Left lung (tissue), 14 donors: ENCODE measurements at regions of chr1 and their contacts with region 1.

Region 1: DNA sequence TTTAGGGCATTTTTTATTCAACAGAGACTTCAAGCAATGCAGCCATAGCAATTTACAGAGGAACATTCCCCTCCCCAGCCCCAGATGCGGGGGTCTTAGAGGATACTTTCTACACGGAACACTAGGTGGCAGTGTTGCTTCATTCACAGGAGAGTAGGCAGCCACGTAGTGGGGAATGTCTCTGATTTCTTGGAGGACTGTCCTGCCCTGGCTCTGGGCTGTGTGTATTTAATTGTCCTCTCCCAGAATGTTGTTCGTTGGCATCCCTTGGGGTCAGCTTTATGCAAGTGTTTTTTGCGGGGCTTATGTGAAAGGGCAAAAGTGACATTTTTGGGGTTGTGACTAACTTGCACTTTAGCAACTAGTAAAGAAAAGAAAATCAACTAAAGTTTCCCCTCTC is 96.9 kb downstream of the PAPPA2 start:
- DNase-seq: peak in 2 of 4 donors; percentile 59 to 82
- ATAC-seq: peak; percentile 98
- H3K4me3 ChIP-seq: no peak overlapping the region
- H3K27ac ChIP-seq: no peak overlapping the region
- H3K4me1 ChIP-seq: no peaks in the 10 kb centered on the region
- H3K27me3 ChIP-seq: peaks cover 0 to 22% of the 10 kb centered on the region in 2 donors
- CTCF ChIP-seq: peak; percentile 69 to 75

Region 2: GRCh38 chr1:176691251-176692228 is 131.7 kb after region 1 on chr1:
- intact Hi-C with region 1: loop called in 1 of 2 experiments (anchors 10 kb)
- DNase-seq: peak in 2 of 4 donors; percentile 17 to 36
- ATAC-seq: peak; percentile 63
- H3K4me3 ChIP-seq: no peak overlapping the region
- H3K27ac ChIP-seq: no peak overlapping the region
- H3K4me1 ChIP-seq: no peaks in the 10 kb centered on the region
- H3K27me3 ChIP-seq: no peaks in the 10 kb centered on the region
- CTCF ChIP-seq: peak; percentile 43 to 54

Region 3: DNA sequence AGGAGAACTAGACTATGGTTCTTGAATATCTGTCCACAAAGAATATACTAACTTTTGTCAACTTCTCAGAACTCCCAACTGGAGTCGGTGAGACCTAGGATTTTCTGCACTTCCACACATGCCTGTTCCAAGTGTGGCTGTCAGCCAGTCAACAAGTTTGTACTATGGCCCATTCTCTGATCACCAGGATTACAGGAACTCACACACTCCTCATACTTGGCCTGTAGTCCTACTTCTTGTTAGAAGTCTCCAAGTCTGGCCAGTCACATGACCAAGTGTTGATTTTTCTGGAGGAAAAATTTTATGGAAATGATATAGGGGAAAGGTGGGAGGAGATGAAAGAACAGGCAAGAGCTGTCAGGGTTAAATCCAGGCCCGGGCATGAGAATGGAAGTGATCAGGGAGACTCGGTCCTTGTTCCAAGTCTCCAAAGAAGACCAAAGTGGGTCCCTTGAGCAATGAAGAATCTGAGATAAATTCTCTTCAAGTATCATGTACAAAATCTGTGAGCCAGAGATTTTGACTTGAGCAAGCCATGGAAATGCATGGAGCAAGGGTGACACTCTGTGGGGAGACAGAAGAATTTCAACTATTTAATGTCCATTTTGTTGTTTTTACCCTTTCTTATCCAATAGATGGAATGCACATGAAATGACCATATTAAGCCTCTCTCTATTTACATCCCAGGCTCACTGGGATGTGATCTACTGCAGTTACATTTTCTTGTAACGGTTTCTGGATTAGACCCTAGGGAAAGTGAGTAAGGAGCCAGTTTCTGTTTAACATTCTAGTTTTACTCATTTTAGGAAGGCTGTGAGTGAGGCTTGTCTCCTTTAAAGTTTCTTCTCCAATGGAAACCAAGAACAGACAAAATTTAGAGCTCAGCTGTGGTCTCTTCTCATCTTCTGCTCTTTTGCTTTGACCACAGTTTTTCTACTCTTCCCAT is 283.7 kb after region 1 on chr1:
- intact Hi-C with region 1: loop called in 1 of 2 experiments (anchors 10 kb)
- DNase-seq: peak in 2 of 4 donors; percentile 57 to 79
- ATAC-seq: peak; percentile 86
- H3K4me3 ChIP-seq: no peak overlapping the region
- H3K27ac ChIP-seq: no peak overlapping the region
- H3K4me1 ChIP-seq: no peaks in the 10 kb centered on the region
- H3K27me3 ChIP-seq: no peaks in the 10 kb centered on the region
- CTCF ChIP-seq: peak in 1 of 2 donors; percentile 44

Region 4: GRCh38 chr1:176878750-176879536 is 319.1 kb after region 1 on chr1:
- intact Hi-C with region 1: loop called in 1 of 2 experiments (anchors 10 kb)
- DNase-seq: no peak
- ATAC-seq: no peak
- H3K4me3 ChIP-seq: no peak overlapping the region
- H3K27ac ChIP-seq: no peak overlapping the region
- H3K4me1 ChIP-seq: no peaks in the 10 kb centered on the region
- H3K27me3 ChIP-seq: no peaks in the 10 kb centered on the region
- CTCF ChIP-seq: no peak